ENCODE measurements at regions of chr1 and their contacts with region 1.

Region 1: DNA sequence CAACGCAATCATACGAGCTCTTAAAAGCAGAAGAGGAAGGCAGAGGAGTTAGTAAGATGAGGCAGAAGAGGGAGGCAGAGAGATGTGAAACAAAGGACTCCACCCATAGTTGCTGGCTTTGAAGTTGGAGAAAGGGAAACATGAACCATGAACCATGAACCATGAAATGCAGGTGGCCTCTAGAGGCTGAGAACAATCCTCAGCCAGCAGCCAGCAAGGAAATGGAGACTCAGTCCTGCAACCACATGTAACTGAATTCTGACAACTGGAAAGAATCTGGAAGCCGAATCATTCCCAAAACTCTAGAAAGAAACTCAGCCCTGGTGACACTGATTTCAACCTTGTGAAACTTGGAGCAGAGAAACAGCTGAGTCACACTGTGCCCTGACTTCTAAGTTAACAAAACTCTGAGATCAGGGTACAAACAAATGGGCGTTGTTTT is 10.1 kb downstream of the DIPK1A start:
- DNase-seq: no peak
- H3K4me3 Mint-ChIP-seq: no peak overlapping the region
- H3K27ac Mint-ChIP-seq: no peak overlapping the region
- H3K4me1 Mint-ChIP-seq: peaks cover 47% of the 10 kb centered on the region
- H3K27me3 Mint-ChIP-seq: no peaks in the 10 kb centered on the region

Region 2: GRCh38 chr1:92909321-92909720 is 41.8 kb before region 1 on chr1:
- intact Hi-C with region 1: loop called (anchors 5 kb)
- DNase-seq: no peak
- H3K4me3 Mint-ChIP-seq: no peak overlapping the region
- H3K27ac Mint-ChIP-seq: no peak overlapping the region
- H3K4me1 Mint-ChIP-seq: peaks cover 36% of the 10 kb centered on the region
- H3K27me3 Mint-ChIP-seq: no peaks in the 10 kb centered on the region

Region 3: GRCh38 chr1:92940541-92940940 is 10.6 kb before region 1 on chr1:
- intact Hi-C with region 1: loop called (anchors 1 kb)
- DNase-seq: no peak
- H3K4me3 Mint-ChIP-seq: no peak overlapping the region
- H3K27ac Mint-ChIP-seq: no peak overlapping the region
- H3K4me1 Mint-ChIP-seq: peaks cover 58% of the 10 kb centered on the region
- H3K27me3 Mint-ChIP-seq: no peaks in the 10 kb centered on the region

Measured in activated T-helper 2 cell treated with anti-CD3 and anti-CD28 coated beads, Interferon-gamma antibody, Interleukin-2, Interleukin-4, amounts not matched to agents 10 μg/mL and 5 μg/mL and 100 μg/mL, durations not matched to agents 14 hours and 24 hours and 36 hours (primary cell).